ENCODE measurements at regions of chr19 and their contacts with region 1.

Region 1: DNA sequence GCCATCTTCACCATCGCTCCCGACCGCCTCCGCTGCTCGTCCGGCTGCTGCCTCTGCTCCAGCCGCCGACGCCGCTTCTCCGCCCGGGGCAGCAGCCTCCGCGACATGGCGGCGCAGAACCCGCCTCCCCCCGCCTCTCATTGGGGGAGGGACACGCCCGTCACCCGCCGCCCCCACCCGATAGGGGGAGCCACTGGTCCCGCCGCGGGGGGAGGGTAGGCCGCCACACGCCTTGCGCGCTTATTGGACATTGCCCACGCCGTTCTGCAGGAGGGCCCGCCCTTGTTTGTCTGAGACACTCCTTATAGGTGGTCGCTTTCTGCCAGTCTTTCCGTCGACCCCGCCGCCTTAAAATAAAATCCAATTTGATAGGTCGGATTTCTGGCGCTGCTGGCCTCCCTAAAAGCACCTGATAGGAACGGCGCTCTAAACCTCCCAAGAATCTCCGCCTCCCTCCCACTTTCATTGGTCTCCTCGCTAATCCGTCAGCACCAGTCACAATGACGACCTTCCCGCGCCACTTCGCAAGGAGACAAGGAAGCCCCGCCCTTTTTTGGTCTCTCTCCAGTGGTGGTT is at the start of gene HNRNPL:
- DNase-seq: peak; percentile 99
- ATAC-seq: peak; percentile 71
- H3K4me3 Mint-ChIP-seq: peak within 1 kb of the TSS; percentile 97
- H3K27ac Mint-ChIP-seq: peak within 1 kb of the TSS; percentile 99
- H3K4me1 Mint-ChIP-seq: peaks cover 42% of the 10 kb centered on the region
- H3K27me3 Mint-ChIP-seq: no peaks in the 10 kb centered on the region
- total RNA-seq, gene HNRNPL: 714 to 722 TPM

Region 2: DNA sequence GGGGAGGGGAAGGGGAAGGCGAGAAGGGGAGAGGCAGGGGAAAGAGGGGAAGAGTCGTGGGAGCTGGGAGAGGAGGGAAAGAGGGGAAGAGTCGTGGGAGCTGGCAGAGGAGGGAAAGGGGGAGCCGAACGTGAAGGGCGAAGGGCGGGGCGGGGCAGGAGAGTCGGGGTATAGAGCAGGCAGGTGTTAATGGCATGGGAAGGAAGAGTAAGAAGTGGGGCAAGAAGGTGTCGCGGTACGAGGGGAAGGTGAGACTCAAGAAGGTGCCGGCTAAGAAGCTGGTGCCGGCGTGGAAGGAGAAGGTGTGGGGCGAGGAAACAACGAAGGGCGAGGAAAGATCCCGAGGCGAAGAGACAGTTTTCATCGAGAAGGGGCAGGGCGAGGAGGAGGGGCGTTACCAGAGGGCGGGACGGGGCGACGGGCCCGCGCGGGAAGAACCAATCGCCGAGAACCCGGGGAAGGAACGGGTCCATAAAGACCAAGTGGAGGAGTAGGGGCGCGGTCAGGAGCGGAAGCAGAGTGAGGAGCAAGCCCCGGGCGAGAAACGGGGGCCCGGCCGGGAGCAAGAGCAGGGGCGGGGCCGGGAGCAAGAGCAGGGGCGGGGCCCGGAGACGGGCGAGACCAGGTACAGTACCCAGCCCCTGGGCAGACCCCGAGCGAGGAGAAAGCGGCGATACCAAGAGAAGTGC is 513.9 kb before region 1 on chr19:
- CTCF ChIA-PET with region 1: no interaction called
- POLR2A ChIA-PET with region 1: no interaction called
- intact Hi-C with region 1: loop called in 1 of 2 experiments (anchors 1 kb)
- DNase-seq: peak; percentile 98
- ATAC-seq: peak; percentile 75
- H3K4me3 Mint-ChIP-seq: peak overlapping the region; percentile 82
- H3K27ac Mint-ChIP-seq: peak overlapping the region; percentile 98
- H3K4me1 Mint-ChIP-seq: peaks cover 12% of the 10 kb centered on the region
- H3K27me3 Mint-ChIP-seq: no peaks in the 10 kb centered on the region

Region 3: GRCh38 chr19:38425810-38426466 is 424.0 kb before region 1 on chr19 and contains the start of gene RASGRP4:
- CTCF ChIA-PET with region 1: no interaction called
- POLR2A ChIA-PET with region 1: no interaction called
- intact Hi-C with region 1: loop called in 1 of 2 experiments (anchors 5 kb)
- DNase-seq: peak; percentile 78
- ATAC-seq: peak; percentile 27
- H3K4me3 Mint-ChIP-seq: peak within 1 kb of the TSS; percentile 60
- H3K27ac Mint-ChIP-seq: peak within 1 kb of the TSS; percentile 90
- H3K4me1 Mint-ChIP-seq: peaks cover 33% of the 10 kb centered on the region
- H3K27me3 Mint-ChIP-seq: no peaks in the 10 kb centered on the region
- total RNA-seq, gene RASGRP4: 5.6 to 5.9 TPM

Region 4: DNA sequence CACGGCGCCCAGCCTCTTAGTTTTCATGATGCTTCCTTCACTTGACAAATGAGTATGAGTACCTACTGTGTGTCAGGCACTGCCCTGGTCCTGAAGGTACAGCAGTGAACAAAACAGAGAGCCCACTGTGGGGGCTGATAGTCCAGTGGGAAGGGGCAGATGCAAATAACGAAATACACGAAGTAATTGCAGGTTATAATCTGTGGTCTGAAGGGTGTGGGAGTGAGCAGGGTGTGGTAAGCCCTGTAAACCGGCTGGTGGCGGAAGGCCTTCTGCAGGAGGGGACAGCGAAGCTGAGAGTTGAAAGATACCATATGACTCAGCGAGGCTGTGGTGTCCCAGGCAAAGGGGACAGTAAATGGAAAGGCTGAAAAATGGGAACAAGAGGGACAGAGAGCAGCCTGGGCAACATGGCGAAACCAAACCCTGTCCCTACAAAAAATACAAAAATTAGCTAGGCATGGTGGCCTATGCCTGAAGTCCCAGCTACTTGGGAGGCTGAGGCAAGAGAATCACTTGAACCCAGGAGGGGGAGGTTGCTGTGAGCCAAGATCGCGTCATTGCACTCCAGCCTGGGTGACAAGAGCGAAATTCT is 292.6 kb before region 1 on chr19:
- CTCF ChIA-PET with region 1: no interaction called
- POLR2A ChIA-PET with region 1: no interaction called
- intact Hi-C with region 1: no loop called
- DNase-seq: peak; percentile 52
- ATAC-seq: peak; percentile 30
- H3K4me3 Mint-ChIP-seq: no peak overlapping the region
- H3K27ac Mint-ChIP-seq: no peak overlapping the region
- H3K4me1 Mint-ChIP-seq: peaks cover 41% of the 10 kb centered on the region
- H3K27me3 Mint-ChIP-seq: peaks cover 2% of the 10 kb centered on the region

Region 5: DNA sequence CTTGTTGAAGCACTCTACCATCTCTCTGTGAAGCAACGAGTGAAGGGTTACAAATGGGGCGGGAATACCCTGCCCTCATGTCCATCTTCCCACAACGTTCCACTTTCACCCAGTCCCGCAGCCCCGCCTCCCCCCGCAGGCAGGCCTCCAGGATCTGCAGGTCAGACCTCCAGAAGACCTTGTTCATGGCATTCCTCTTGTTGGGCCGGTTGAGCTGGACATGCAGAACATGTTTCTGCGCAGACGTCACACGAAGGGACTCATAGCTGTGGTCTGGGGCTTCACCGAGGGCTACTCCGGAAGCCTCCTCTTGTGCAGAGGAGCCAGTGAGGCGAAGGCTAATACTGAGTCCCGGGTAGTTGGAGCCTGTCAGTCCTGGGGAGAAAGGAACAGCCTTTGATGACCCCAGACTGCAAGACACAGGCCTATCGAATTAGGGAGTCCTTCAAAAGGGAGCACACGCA is 18.8 kb before region 1 on chr19:
- CTCF ChIA-PET with region 1: interaction called, 7 read pairs
- POLR2A ChIA-PET with region 1: interaction called, 28 read pairs
- intact Hi-C with region 1: loop called (anchors 1 kb)
- DNase-seq: peak; percentile 58
- ATAC-seq: peak; percentile 53
- H3K4me3 Mint-ChIP-seq: peak overlapping the region; percentile 87
- H3K27ac Mint-ChIP-seq: peak overlapping the region; percentile 83
- H3K4me1 Mint-ChIP-seq: peaks cover 25% of the 10 kb centered on the region
- H3K27me3 Mint-ChIP-seq: no peaks in the 10 kb centered on the region

Region 6: GRCh38 chr19:38877781-38878574 is 28.0 kb after region 1 on chr19 and contains the start of gene RINL:
- CTCF ChIA-PET with region 1: interaction called, 3 read pairs
- POLR2A ChIA-PET with region 1: interaction called, 5 read pairs
- intact Hi-C with region 1: loop called in 1 of 2 experiments (anchors 1 kb)
- DNase-seq: peak; percentile 84
- ATAC-seq: peak; percentile 93
- H3K4me3 Mint-ChIP-seq: peak within 1 kb of the TSS; percentile 89
- H3K27ac Mint-ChIP-seq: peak within 1 kb of the TSS; percentile 99
- H3K4me1 Mint-ChIP-seq: peaks cover 27% of the 10 kb centered on the region
- H3K27me3 Mint-ChIP-seq: no peaks in the 10 kb centered on the region
- total RNA-seq, gene RINL: 85.8 to 90.3 TPM

Region 7: DNA sequence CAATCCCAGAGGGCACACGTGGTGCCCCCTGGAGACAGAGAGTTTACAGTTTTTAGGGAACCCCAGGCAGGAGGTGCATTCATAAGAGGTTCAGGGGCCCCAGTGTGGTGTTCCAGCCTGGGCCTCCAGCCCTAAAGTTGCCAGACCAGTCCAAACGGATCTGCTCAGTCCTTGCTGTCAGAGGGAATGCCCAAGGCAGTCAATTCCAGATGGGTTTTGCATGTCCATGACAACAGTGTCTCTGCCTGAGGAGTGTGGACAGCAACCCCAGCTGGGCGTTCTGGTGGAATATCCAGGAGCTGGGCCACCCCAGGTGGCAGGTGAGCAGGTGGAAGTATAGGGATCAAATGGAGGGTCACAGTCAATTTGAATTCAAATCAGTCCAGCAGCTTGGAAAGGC is 157.1 kb after region 1 on chr19:
- CTCF ChIA-PET with region 1: no interaction called
- POLR2A ChIA-PET with region 1: no interaction called
- intact Hi-C with region 1: no loop called
- DNase-seq: no peak
- ATAC-seq: no peak
- H3K4me3 Mint-ChIP-seq: no peak overlapping the region
- H3K27ac Mint-ChIP-seq: no peak overlapping the region
- H3K4me1 Mint-ChIP-seq: peaks cover 2% of the 10 kb centered on the region
- H3K27me3 Mint-ChIP-seq: peaks cover 14% of the 10 kb centered on the region

Region 8: DNA sequence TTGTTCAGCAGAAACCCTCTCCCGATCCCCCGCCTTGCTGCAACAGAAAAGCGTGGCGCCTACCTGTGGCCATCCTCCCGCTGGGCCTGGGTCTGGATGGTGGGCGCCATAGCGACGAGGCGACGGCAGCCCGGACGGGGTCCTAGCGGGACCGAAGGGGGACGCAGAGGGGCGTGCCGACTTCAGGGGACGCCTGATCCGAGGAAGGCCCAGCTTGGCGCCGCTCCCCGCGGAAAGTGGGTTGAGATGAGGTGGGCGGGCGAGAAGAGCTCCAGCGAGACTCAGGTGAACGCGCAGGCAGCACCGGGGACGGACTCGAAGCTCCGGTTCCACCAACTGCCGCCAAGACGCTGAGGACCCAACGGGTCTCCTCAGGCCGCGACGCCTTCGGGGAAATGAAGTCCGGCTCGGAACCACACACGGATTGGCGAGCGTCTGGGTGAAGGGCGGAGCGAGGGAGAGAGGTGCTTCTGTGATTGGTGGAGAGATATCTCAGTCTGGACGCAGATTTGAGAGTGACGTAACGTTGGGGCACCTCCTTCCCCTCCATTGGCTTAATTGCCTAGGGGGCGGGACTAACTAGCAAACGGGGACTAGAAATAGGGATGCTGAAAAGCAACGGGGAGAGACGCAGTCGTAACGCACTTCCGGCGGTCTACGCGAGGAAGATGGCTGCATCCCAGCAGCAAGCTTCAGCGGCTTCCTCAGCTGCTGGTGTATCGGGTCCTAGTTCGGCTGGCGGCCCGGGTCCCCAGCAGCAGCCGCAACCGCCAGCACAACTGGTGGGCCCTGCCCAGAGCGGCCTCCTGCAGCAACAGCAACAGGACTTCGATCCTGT is 541.0 kb after region 1 on chr19 and contains the starts of genes MED29 and PAF1:
- CTCF ChIA-PET with region 1: no interaction called
- POLR2A ChIA-PET with region 1: no interaction called
- intact Hi-C with region 1: loop called in 1 of 2 experiments (anchors 1 kb)
- DNase-seq: peak; percentile 98
- ATAC-seq: peak; percentile 97
- H3K4me3 Mint-ChIP-seq: peak within 1 kb of the TSS; percentile 99
- H3K27ac Mint-ChIP-seq: peak within 1 kb of the TSS; percentile 98
- H3K4me1 Mint-ChIP-seq: peaks cover 28% of the 10 kb centered on the region
- H3K27me3 Mint-ChIP-seq: no peaks in the 10 kb centered on the region
- total RNA-seq, gene MED29: 24.0 to 34.6 TPM
- total RNA-seq, gene PAF1: 40.4 to 54.2 TPM